CD14-positive monocyte (primary cell): ENCODE measurements at regions of chr16 and their contacts with region 1.

Region 1: GRCh38 chr16:88706288-88706964 is at the starts of genes CTU2 and RNF166:
- DNase-seq: peak; percentile 87 to 94 (median 90)
- H3K4me3 ChIP-seq: peak within 1 kb of the TSS; percentile 78 to 96 (median 93)
- H3K4me3 Mint-ChIP-seq: peak within 1 kb of the TSS; percentile 99
- H3K27ac ChIP-seq: peak within 1 kb of the TSS; percentile 84 to 88
- H3K27ac Mint-ChIP-seq: peak within 1 kb of the TSS; percentile 90 to 99 (median 98)
- H3K4me1 ChIP-seq: peaks cover 49 to 55% of the 10 kb centered on the region in 2 donors
- H3K4me1 Mint-ChIP-seq: peaks cover 46% of the 10 kb centered on the region
- H3K27me3 ChIP-seq: no peaks in the 10 kb centered on the region
- H3K27me3 Mint-ChIP-seq: peaks cover 0 to 4% (median 3%) of the 10 kb centered on the region in 3 donors
- CTCF ChIP-seq: no peak
- polyA plus RNA-seq, gene CTU2: 5.9 to 10.3 (median 7.5) TPM
- polyA plus RNA-seq, gene RNF166: 99.3 to 255 (median 120) TPM

Region 2: DNA sequence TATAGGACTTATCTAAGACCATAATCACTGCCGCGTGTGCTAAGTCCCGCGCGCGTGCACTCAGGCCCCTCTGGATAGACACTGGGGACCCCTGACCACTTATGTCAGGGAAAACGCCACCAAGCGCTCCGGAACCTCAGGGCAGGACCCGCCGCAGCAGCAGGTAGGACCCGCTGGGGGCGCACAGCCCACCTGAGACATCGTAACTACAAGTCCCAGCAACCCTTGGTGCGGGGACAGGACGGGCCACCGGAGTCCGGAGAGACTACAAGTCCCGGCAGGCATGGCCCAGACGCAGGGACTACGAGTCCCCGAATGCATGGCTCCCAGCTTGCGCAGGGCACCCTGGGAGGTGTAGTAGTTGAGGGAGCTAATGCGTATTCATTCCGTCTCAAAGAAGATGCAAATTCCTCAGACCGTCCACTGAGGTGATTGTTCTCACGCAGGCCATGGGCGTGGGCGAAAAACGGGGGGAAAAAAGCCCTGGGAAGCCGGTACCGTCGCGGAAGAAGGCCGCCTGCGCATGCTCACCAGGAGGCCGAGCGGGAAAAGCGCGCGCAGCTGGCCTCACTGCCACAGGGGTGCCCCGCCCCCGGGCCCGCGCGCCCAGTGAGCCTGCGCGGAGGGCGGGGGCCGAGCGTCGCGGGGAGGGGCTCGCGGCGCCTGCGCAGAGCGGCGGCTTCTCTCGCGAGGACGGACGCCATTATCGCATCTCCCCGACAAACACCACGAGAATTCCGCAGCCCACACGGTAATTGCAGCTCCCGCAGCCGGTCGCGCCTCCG is 755.5 kb before region 1 on chr16 and contains the start of gene BANP:
- intact Hi-C with region 1: loop called in 1 of 2 experiments (anchors 10 kb)
- DNase-seq: peak; percentile 97
- H3K4me3 ChIP-seq: peak within 1 kb of the TSS; percentile 79 to 94 (median 90)
- H3K4me3 Mint-ChIP-seq: peak within 1 kb of the TSS; percentile 84 to 94
- H3K27ac ChIP-seq: peak within 1 kb of the TSS; percentile 97 to 99
- H3K27ac Mint-ChIP-seq: peak within 1 kb of the TSS; percentile 97 to 100 (median 99)
- H3K4me1 ChIP-seq: peaks cover 68 to 80% of the 10 kb centered on the region in 2 donors
- H3K4me1 Mint-ChIP-seq: peaks cover 68% of the 10 kb centered on the region
- H3K27me3 ChIP-seq: no peaks in the 10 kb centered on the region
- H3K27me3 Mint-ChIP-seq: peaks cover 0 to 5% (median 0%) of the 10 kb centered on the region in 3 donors
- CTCF ChIP-seq: no peak
- polyA plus RNA-seq, gene BANP: 10.1 to 40.9 (median 11.7) TPM

Region 3: GRCh38 chr16:89115216-89115861 is 408.9 kb after region 1 on chr16:
- intact Hi-C with region 1: loop called in 1 of 2 experiments (anchors 10 kb)
- DNase-seq: peak; percentile 93 to 98 (median 96)
- H3K4me3 ChIP-seq: peak overlapping the region; percentile 25 to 72 (median 30)
- H3K4me3 Mint-ChIP-seq: peak overlapping the region; percentile 81 to 89
- H3K27ac ChIP-seq: peak overlapping the region; percentile 65 to 88
- H3K27ac Mint-ChIP-seq: peak overlapping the region; percentile 92 to 99 (median 96)
- H3K4me1 ChIP-seq: peaks cover 42 to 52% of the 10 kb centered on the region in 2 donors
- H3K4me1 Mint-ChIP-seq: peaks cover 45% of the 10 kb centered on the region
- H3K27me3 ChIP-seq: no peaks in the 10 kb centered on the region
- H3K27me3 Mint-ChIP-seq: peaks cover 0 to 2% (median 0%) of the 10 kb centered on the region in 3 donors
- CTCF ChIP-seq: no peak